Heart right ventricle (tissue), 16 donors: ENCODE measurements at regions of chr20 and their contacts with region 1.

Region 1: DNA sequence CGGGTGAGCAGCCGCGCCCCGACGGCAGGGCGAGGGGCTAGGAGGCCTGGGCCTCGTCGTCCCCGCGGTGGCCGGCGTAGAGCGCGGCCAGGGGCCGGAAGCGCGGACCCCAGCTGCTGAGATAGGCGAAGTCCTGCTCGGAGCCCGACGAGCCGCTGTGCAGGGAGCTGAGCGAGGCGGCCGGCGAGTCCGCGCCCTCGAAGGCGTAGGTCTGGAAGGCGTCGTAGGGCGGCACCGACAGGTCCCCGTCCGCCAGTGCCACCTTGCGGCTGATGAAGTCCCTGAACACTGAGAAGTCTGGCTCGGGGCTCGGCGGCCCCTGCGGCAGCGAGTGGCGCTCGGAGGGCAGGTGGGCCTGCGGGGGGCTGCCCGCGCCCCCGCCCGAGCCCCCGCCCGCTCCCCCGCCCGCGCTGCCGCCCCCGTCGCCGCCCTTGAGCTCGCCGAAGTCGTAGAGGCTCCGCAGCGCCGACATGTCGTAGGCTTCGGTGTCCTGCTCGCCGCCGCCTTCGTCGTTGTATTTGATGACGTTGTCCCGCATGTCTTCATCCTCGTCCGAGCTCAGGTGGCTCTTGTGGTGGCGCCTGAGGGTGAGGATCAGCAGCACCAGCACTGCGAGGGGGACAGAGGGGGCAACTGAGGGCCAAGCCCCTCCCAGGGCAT is 56.5 kb downstream of the CD40 start:
- DNase-seq: peak; percentile 64 to 77
- ATAC-seq: peak; percentile 56 to 82 (median 76)
- H3K4me3 ChIP-seq: no peak overlapping the region
- H3K27ac ChIP-seq: no peak overlapping the region
- H3K4me1 ChIP-seq: peaks cover 0 to 12% (median 0%) of the 10 kb centered on the region in 9 donors
- H3K27me3 ChIP-seq: peaks cover 12 to 75% (median 61%) of the 10 kb centered on the region in 7 donors
- CTCF ChIP-seq: peak; percentile 37 to 75 (median 63)

Region 2: DNA sequence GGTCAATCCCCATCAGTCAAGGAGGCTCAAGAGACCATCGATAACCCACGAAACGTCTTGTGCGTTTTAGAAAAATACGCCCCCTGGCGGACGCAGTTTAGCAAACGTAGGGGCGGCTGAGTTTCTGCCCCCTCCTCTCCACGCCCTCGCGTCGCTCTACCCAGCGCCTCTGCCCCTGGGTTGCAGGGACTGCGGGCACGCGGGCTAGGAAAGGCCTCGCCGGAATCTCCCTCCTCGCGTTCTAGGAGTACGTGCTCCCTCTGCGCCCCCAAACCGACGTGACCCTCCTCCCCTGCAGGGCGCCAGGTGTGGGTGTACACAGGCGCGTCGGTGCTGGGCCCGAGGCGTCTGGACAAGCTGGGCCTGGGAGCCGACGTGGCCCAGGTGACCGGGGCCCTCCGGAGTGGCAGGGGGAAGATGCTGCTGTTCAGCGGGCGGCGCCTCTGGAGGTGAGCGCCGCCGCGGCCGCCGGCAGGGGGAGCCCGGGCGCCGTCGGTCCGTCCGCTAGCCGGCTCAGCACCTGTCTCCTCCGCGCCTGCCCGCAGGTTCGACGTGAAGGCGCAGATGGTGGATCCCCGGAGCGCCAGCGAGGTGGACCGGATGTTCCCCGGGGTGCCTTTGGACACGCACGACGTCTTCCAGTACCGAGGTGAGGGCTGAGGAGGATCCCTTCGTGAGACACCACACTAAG is 160.6 kb before region 1 on chr20:
- intact Hi-C with region 1: loop called in 1 of 10 experiments (anchors 5 kb)
- DNase-seq: peak in 1 of 2 donors; percentile 49
- ATAC-seq: peak in 7 of 8 donors; percentile 40 to 77 (median 68)
- H3K4me3 ChIP-seq: peak overlapping the region in 1 of 10 donors; percentile 30
- H3K27ac ChIP-seq: no peak overlapping the region
- H3K4me1 ChIP-seq: peaks cover 0 to 49% (median 9%) of the 10 kb centered on the region in 9 donors
- H3K27me3 ChIP-seq: peaks cover 24 to 99% (median 91%) of the 10 kb centered on the region in 7 donors
- CTCF ChIP-seq: peak; percentile 27 to 83 (median 68)

Region 3: GRCh38 chr20:46022411-46023147 is 152.0 kb before region 1 on chr20:
- intact Hi-C with region 1: loop called (anchors 2 to 10 kb)
- DNase-seq: peak; percentile 39 to 74
- ATAC-seq: peak; percentile 30 to 76 (median 58)
- H3K4me3 ChIP-seq: peak overlapping the region in 4 of 10 donors; percentile 7 to 52 (median 50)
- H3K27ac ChIP-seq: no peak overlapping the region
- H3K4me1 ChIP-seq: peaks cover 0 to 20% (median 9%) of the 10 kb centered on the region in 9 donors
- H3K27me3 ChIP-seq: peaks cover 14 to 100% (median 92%) of the 10 kb centered on the region in 7 donors
- CTCF ChIP-seq: peak; percentile 41 to 74 (median 68)